ENCODE measurements at regions of chr17 and their contacts with region 1.

Region 1: DNA sequence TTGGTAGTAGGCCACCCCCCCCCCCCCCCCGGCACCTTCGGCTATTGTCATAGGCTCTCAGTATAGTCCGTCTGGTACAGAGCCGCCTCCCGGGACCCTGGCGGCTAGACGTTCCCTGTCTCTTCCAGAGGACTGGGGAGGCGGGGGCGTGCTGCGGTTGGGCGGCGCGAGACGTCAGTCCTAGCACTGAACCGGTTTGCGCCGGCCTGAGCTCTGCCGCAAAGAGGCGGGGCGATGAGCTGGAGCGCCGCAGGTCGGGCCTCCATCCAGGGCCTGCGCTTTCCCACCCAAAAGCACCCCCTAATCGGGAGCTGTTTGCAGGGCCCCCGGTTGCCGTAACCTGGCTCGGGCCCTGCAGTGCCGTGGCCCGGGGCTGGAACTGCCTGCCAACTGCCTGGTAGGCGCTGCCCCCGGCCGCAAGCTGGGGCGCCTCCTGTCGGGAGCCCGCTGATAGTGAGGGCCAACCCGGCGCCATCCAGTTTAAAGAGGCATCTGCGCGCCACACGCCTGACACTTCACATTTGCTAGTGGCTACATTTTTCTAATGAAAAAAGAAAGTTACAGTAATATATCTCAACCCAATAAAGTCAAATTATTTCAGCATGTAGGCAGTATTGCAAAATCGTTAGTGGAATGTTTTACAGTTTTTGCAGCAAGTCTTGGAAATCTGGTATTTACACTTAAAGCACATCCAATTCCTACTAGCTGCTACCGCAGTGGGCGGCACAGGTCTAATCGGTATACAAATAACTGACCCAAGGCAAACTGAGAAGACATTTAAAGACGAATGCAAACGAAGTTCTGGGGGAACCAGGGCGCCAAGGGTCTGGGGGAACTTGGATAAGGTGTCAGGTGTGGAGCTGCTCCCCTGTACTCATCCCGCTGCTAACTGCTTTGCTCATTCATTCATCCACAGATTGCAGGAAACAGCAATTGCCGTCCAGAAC is 748 bp upstream of the USP22 start:
- DNase-seq: peak in 12 of 14 experiments; percentile 90 to 99 (median 94)
- ATAC-seq: peak; percentile 81
- H3K4me3 ChIP-seq: peak overlapping the region; percentile 73
- H3K4me3 Mint-ChIP-seq: peak overlapping the region; percentile 91
- H3K27ac ChIP-seq: peak overlapping the region; percentile 91 to 93
- H3K27ac Mint-ChIP-seq: peak overlapping the region; percentile 94
- H3K4me1 ChIP-seq: peaks cover 34% of the 10 kb centered on the region
- H3K4me1 Mint-ChIP-seq: peaks cover 42% of the 10 kb centered on the region
- H3K27me3 ChIP-seq: no peaks in the 10 kb centered on the region
- H3K27me3 Mint-ChIP-seq: no peaks in the 10 kb centered on the region
- CTCF ChIP-seq: peak; percentile 97

Region 2: GRCh38 chr17:20200016-20200795 is 843.4 kb before region 1 on chr17:
- CTCF ChIA-PET with region 1: no interaction called
- POLR2A ChIA-PET with region 1: no interaction called
- intact Hi-C with region 1: no loop called
- DNase-seq: no peak
- ATAC-seq: no peak
- H3K4me3 ChIP-seq: no peak overlapping the region
- H3K4me3 Mint-ChIP-seq: no peak overlapping the region
- H3K27ac ChIP-seq: no peak overlapping the region
- H3K27ac Mint-ChIP-seq: no peak overlapping the region
- H3K4me1 ChIP-seq: no peaks in the 10 kb centered on the region
- H3K4me1 Mint-ChIP-seq: peaks cover 2% of the 10 kb centered on the region
- H3K27me3 ChIP-seq: no peaks in the 10 kb centered on the region
- H3K27me3 Mint-ChIP-seq: no peaks in the 10 kb centered on the region
- CTCF ChIP-seq: no peak

Region 3: DNA sequence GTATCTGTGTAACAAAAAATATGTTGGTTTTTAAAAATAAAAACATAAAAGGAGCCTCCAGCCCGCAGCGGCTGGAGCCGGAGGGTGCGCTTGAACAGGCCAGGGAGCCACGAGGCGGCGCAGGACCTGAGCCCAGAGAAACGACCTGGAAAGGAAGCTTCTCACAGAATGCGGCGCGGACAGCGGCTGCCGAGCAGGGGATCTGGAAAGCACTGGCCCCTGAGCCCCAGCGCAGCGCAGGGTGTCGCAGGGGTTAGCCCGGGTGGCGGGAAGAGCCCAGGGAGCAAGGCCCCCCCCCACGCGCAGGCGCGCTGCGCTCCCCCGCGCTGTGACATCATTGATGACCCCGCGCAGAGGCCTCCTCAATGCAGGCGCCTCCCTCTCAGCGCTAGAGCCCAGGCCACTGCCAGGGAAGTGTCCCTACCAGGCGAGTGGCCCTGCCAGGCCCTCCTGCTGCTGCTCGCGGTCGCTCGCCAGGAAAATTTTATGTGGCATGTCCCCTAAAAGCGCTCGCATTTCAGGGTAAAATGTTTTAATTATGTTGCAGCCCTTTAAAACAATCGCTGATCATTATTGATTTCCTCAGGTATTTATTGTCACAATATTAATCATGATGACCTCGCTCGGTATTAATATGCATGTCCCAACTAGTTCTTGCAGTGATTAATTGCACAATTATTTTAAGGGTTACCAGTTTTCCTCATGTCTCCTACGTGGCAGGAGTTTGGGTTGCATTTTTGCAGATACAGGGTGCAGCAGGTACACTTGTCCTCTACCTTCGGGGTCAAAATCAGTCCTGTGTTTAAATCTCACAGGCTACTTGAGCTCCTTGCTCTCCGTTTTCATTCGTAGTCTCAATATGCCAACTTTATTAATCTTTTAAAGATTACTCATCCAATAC is 134.9 kb before region 1 on chr17:
- CTCF ChIA-PET with region 1: no interaction called
- POLR2A ChIA-PET with region 1: no interaction called
- intact Hi-C with region 1: loop called (anchors 1 to 5 kb)
- DNase-seq: peak; percentile 48 to 88 (median 70)
- ATAC-seq: peak; percentile 99
- H3K4me3 ChIP-seq: peak overlapping the region; percentile 66
- H3K4me3 Mint-ChIP-seq: peak overlapping the region; percentile 73
- H3K27ac ChIP-seq: no peak overlapping the region
- H3K27ac Mint-ChIP-seq: peak overlapping the region; percentile 30
- H3K4me1 ChIP-seq: peaks cover 12% of the 10 kb centered on the region
- H3K4me1 Mint-ChIP-seq: peaks cover 11% of the 10 kb centered on the region
- H3K27me3 ChIP-seq: no peaks in the 10 kb centered on the region
- H3K27me3 Mint-ChIP-seq: no peaks in the 10 kb centered on the region
- CTCF ChIP-seq: peak; percentile 51

Region 4: DNA sequence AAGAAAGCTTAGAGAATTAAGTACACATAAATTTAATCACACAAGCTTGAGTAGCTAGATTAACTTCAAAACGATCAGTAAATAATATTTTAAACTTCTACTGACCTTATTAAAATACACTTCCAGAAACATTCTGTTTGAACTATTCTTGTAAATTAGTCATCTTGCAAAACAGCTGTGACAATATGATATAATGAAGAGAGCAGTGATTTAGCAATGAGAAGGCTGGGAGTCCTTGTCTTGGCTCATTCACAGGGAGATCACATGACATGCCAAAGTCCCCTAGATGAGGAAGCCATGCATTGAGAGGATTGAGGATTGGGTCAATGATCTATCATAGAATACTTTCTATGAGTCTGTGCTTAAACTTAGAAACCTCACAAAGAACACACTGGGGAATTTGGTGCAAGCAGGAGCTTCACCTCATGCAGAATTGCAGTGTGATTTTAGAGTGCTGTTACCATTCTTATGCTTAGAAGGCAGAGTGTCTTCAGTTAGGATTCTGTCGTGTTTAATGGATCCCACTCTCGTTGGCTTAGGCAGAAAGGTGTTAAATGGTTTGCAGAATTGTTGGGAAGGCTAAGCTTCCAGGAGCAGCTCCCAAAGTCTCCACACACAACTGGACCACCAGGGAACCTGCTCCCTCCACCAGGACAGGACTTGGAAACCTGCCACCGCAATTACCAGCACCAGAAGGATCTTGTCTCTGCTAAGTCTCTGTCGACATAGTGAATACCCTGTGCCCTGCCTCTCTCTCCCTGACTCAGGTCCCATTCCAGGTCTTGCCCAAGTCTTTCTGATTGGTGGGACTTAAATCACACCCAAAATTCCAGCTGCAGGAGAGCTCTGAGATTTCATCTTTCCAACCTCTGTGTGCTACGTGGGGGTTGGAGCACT is 87.9 kb before region 1 on chr17:
- CTCF ChIA-PET with region 1: no interaction called
- POLR2A ChIA-PET with region 1: no interaction called
- intact Hi-C with region 1: no loop called
- DNase-seq: no peak
- ATAC-seq: no peak
- H3K4me3 ChIP-seq: no peak overlapping the region
- H3K4me3 Mint-ChIP-seq: no peak overlapping the region
- H3K27ac ChIP-seq: no peak overlapping the region
- H3K27ac Mint-ChIP-seq: no peak overlapping the region
- H3K4me1 ChIP-seq: no peaks in the 10 kb centered on the region
- H3K4me1 Mint-ChIP-seq: no peaks in the 10 kb centered on the region
- H3K27me3 ChIP-seq: peaks cover 0 to 3% of the 10 kb centered on the region in 2 experiments
- H3K27me3 Mint-ChIP-seq: peaks cover 50% of the 10 kb centered on the region
- CTCF ChIP-seq: no peak

Region 5: DNA sequence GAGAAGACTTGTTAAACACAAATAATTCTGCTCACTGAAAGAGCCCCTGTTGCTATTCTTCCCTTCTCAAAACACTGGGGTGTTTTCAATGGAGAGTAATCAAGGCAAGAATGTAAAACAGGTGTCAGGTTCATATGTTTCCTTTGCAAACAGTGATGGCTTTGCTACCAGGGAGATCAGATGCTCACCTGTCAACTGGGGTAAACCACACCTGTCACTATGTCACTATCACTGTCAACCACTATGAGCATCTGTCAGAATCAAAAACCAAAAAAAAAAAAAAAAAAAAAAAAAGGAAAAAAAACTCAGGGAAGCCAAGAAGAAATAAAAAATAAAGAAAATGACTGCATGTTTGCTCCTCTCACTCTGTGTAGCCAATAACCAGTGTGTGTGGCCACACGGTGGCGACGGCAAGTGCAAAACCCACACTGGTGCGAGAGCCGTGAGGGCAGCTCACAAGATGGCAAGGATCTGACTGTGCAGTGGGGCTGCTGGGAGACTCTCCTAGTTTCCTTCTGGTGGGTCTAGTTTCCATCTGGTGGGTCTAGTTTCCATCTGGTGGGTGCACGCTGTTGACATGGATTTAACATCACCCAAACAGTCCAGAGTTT is 23.5 kb before region 1 on chr17:
- CTCF ChIA-PET with region 1: interaction called, 10 read pairs
- POLR2A ChIA-PET with region 1: interaction called, 20 read pairs
- intact Hi-C with region 1: loop called in 1 of 2 experiments (anchors 1 kb)
- DNase-seq: peak in 10 of 14 experiments; percentile 27 to 72 (median 40)
- ATAC-seq: peak; percentile 74
- H3K4me3 ChIP-seq: no peak overlapping the region
- H3K4me3 Mint-ChIP-seq: no peak overlapping the region
- H3K27ac ChIP-seq: no peak overlapping the region
- H3K27ac Mint-ChIP-seq: peak overlapping the region; percentile 47
- H3K4me1 ChIP-seq: peaks cover 21% of the 10 kb centered on the region
- H3K4me1 Mint-ChIP-seq: peaks cover 37% of the 10 kb centered on the region
- H3K27me3 ChIP-seq: no peaks in the 10 kb centered on the region
- H3K27me3 Mint-ChIP-seq: no peaks in the 10 kb centered on the region
- CTCF ChIP-seq: no peak

Region 6: DNA sequence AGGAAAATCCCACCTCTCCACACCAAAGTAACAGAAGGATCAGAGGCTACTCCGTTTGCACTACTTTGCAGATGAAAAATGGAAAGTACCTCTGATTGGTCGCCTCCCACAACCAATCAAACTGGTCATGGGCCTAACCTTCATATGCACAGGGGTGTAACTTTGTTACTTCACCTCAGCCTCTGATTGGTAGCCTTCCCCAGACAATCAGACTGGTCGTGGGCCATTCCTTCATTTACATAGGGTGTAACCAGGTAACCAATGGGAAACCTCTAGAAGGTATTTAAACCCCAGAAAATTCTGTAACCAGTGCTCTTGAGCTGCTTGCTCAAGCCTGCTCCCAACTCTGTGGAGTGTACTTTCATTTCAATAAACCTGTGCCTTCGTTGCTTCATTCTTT is 38.4 kb after region 1 on chr17:
- CTCF ChIA-PET with region 1: no interaction called
- POLR2A ChIA-PET with region 1: no interaction called
- intact Hi-C with region 1: no loop called
- DNase-seq: no peak
- ATAC-seq: no peak
- H3K4me3 ChIP-seq: no peak overlapping the region
- H3K4me3 Mint-ChIP-seq: no peak overlapping the region
- H3K27ac ChIP-seq: no peak overlapping the region
- H3K27ac Mint-ChIP-seq: no peak overlapping the region
- H3K4me1 ChIP-seq: no peaks in the 10 kb centered on the region
- H3K4me1 Mint-ChIP-seq: no peaks in the 10 kb centered on the region
- H3K27me3 ChIP-seq: no peaks in the 10 kb centered on the region
- H3K27me3 Mint-ChIP-seq: peaks cover 25% of the 10 kb centered on the region
- CTCF ChIP-seq: no peak

Region 7: DNA sequence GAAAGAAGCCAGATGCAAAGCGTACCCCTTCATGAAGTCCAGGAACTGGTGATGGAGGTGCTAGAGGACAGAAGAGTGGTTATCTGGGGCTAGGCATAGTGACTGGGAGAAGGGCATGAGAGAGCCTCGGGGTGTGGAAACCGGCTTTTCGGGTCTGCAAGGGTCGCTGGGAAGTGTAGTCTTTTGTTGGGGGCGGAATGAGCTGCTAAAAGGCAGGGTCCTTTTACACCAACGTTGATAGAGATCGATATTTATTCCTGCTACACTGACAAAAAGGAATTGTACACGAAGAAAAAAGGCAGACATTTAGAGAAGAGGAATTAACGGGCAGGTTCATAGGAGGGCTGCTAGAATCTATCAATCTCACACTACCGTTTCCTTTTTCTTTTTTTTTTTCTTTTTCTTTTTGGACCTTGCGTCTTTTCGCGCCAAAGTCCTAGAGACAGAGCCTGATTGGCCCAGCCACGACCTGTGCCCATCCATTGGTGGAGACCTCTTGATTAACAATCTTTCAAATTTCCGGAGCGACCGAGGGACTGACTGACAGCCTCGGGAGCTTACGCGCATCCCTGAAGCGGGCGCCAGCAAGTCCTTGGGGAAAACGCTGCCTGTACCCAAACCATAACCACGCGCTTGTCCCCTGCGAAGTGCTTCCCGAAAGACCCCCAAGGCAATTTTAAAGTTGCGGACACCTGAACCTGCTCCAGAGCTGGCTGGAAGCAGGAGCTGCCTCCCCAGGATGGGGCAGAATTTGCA is 55.6 kb after region 1 on chr17:
- CTCF ChIA-PET with region 1: interaction called, 21 read pairs
- POLR2A ChIA-PET with region 1: interaction called, 23 read pairs
- intact Hi-C with region 1: loop called (anchors 1 to 2 kb)
- DNase-seq: peak; percentile 32 to 82 (median 48)
- ATAC-seq: peak; percentile 97
- H3K4me3 ChIP-seq: peak overlapping the region; percentile 62
- H3K4me3 Mint-ChIP-seq: peak overlapping the region; percentile 85
- H3K27ac ChIP-seq: no peak overlapping the region
- H3K27ac Mint-ChIP-seq: no peak overlapping the region
- H3K4me1 ChIP-seq: peaks cover 13% of the 10 kb centered on the region
- H3K4me1 Mint-ChIP-seq: peaks cover 12% of the 10 kb centered on the region
- H3K27me3 ChIP-seq: no peaks in the 10 kb centered on the region
- H3K27me3 Mint-ChIP-seq: no peaks in the 10 kb centered on the region
- CTCF ChIP-seq: no peak

Region 8: DNA sequence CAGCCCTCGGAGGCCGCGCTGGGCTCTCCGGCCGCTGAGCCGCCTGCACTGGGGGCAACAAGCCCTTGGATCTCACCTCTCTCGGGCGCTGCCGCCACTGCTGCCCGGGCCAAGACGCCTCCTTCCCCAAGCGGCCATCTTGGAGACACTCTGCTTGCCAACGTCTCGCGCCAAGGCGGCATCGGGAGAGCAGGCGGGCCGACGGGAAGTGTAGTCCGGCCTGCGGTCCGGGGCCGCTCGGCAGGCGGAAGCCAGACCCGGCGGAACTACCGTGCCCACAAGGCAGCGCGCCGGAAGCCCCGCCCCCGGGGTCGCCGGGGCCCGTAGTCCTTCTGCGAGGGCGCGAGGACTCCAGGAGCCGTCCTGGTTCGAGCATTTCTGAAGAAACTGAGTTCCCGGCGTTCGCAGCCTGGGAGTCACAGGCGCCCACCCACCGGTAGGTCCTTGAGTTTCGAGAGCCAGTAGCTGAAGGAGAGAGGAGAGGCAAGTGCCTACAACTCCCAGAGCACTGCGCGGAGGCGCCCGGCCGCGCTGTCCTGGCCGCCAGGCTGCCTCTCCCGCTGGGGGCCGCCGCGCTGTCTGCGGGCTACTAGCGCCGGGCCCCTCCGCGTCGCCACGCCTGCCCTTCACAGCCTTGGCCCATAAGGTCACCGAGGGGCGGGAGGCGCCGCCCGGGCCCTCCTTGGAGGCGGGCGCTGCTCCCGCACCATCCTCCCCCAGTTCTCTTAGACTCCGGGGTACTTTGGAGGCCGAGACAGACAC is 170.6 kb after region 1 on chr17 and contains the start of gene TMEM11:
- CTCF ChIA-PET with region 1: no interaction called
- POLR2A ChIA-PET with region 1: interaction called, 6 read pairs
- intact Hi-C with region 1: loop called in 1 of 2 experiments (anchors 1 kb)
- DNase-seq: peak; percentile 89 to 98 (median 94)
- ATAC-seq: peak; percentile 94
- H3K4me3 ChIP-seq: peak within 1 kb of the TSS; percentile 97
- H3K4me3 Mint-ChIP-seq: peak within 1 kb of the TSS; percentile 98
- H3K27ac ChIP-seq: peak within 1 kb of the TSS; percentile 87
- H3K27ac Mint-ChIP-seq: peak within 1 kb of the TSS; percentile 85
- H3K4me1 ChIP-seq: peaks cover 53% of the 10 kb centered on the region
- H3K4me1 Mint-ChIP-seq: peaks cover 77% of the 10 kb centered on the region
- H3K27me3 ChIP-seq: no peaks in the 10 kb centered on the region
- H3K27me3 Mint-ChIP-seq: no peaks in the 10 kb centered on the region
- CTCF ChIP-seq: no peak
- total RNA-seq, gene TMEM11: 17.8 to 19.2 TPM

Region 9: GRCh38 chr17:21275579-21276263 is 232.2 kb after region 1 on chr17:
- CTCF ChIA-PET with region 1: interaction called, 4 read pairs
- POLR2A ChIA-PET with region 1: interaction called, 19 read pairs
- intact Hi-C with region 1: no loop called
- DNase-seq: peak; percentile 80 to 98 (median 93)
- ATAC-seq: peak; percentile 72
- H3K4me3 ChIP-seq: peak overlapping the region; percentile 57
- H3K4me3 Mint-ChIP-seq: peak overlapping the region; percentile 94
- H3K27ac ChIP-seq: peak overlapping the region; percentile 45 to 83
- H3K27ac Mint-ChIP-seq: peak overlapping the region; percentile 72
- H3K4me1 ChIP-seq: peaks cover 54% of the 10 kb centered on the region
- H3K4me1 Mint-ChIP-seq: peaks cover 47% of the 10 kb centered on the region
- H3K27me3 ChIP-seq: no peaks in the 10 kb centered on the region
- H3K27me3 Mint-ChIP-seq: no peaks in the 10 kb centered on the region
- CTCF ChIP-seq: no peak

Region 10: DNA sequence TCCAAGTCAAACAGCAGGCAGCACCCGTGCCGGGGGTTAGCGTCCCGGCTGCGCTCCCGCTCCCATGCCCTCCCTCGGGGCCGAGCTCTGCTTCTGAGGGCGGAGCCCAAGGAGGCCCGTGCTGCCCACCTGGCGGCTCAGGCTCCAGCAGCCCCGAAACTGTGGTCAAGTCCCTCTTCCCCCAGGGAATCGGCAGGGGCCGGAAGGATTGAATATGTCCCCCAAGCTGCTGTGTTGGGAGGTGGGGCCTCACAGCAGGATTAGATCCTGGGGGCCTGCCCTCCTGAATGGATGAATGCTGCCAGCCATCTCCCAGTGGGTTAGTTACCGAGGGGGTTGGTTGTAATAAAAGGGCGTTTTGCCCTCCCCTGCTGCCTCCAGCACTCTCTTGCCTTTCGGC is 274.9 kb after region 1 on chr17:
- CTCF ChIA-PET with region 1: no interaction called
- POLR2A ChIA-PET with region 1: no interaction called
- intact Hi-C with region 1: loop called in 1 of 2 experiments (anchors 10 kb)
- DNase-seq: peak in 1 of 14 experiments; percentile 18
- ATAC-seq: no peak
- H3K4me3 ChIP-seq: no peak overlapping the region
- H3K4me3 Mint-ChIP-seq: no peak overlapping the region
- H3K27ac ChIP-seq: no peak overlapping the region
- H3K27ac Mint-ChIP-seq: no peak overlapping the region
- H3K4me1 ChIP-seq: peaks cover 14% of the 10 kb centered on the region
- H3K4me1 Mint-ChIP-seq: peaks cover 6% of the 10 kb centered on the region
- H3K27me3 ChIP-seq: no peaks in the 10 kb centered on the region
- H3K27me3 Mint-ChIP-seq: peaks cover 4% of the 10 kb centered on the region
- CTCF ChIP-seq: no peak

Measured in CD4-positive, alpha-beta T cell (primary cell).